H1 (cell line): ENCODE measurements at regions of chr11 and their contacts with region 1.

Region 1: GRCh38 chr11:29328961-29329441 is 687.8 kb downstream of the KCNA4 start:
- DNase-seq: no peak
- H3K4me3 ChIP-seq: no peak overlapping the region
- H3K27ac ChIP-seq: no peak overlapping the region
- H3K4me1 ChIP-seq: no peaks in the 10 kb centered on the region
- H3K27me3 ChIP-seq: no peaks in the 10 kb centered on the region
- CTCF ChIP-seq: peak in 2 of 3 experiments; percentile 28 to 46; a peak in 2 of 4 replicates
- EP300 ChIP-seq: no peak
- POLR2A ChIP-seq: no peak
- RAD21 ChIP-seq: peak; percentile 58 to 68

Region 2: DNA sequence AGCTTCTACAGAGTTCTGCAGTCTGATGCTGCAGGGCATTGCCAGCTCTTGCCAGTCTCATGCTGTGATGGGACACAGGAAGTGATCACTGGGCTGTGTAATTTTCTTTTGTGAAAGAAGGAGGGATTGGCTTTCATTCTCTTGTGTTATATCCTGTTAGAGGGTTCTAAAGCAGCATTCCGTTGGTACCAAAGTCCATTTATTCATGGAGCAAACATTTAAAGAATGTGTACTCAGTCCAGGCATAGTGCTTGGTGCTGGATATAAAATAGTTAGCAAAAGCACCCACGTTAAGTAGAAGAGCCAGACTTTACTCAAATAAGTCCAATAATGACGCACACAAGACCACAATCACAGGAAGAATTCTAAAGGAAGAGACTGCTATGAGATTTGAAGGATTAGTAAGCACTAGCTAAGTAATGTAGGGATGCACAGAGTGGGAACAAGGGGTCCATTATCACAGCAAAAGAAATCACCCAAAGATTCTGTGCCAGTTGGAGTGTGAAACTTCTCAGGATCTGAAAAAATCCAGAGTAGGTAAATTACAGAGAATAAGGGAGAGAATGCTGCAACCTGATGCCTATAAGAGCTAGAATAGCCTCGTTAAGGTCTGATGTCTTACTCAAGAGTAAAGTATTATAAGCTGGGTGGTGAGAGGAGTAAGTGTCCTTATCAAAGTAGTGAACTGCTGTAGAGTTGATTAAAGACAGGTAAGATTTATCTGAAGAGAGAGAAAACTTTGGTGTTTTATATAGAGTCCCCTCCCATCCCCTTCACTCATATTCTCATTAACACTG is 492.5 kb before region 1 on chr11:
- CTCF ChIA-PET with region 1: no interaction called
- POLR2A ChIA-PET with region 1: no interaction called
- DNase-seq: no peak
- H3K4me3 ChIP-seq: no peak overlapping the region
- H3K27ac ChIP-seq: no peak overlapping the region
- H3K4me1 ChIP-seq: peaks cover 0 to 3% (median 0%) of the 10 kb centered on the region in 4 experiments; a peak in 2 of 7 replicates
- H3K27me3 ChIP-seq: no peaks in the 10 kb centered on the region
- CTCF ChIP-seq: no peak
- EP300 ChIP-seq: no peak
- POLR2A ChIP-seq: no peak
- RAD21 ChIP-seq: no peak

Region 3: GRCh38 chr11:29214833-29215232 is 114.2 kb before region 1 on chr11:
- CTCF ChIA-PET with region 1: no interaction called
- POLR2A ChIA-PET with region 1: no interaction called
- DNase-seq: no peak
- H3K4me3 ChIP-seq: no peak overlapping the region
- H3K27ac ChIP-seq: no peak overlapping the region
- H3K4me1 ChIP-seq: no peaks in the 10 kb centered on the region
- H3K27me3 ChIP-seq: no peaks in the 10 kb centered on the region
- CTCF ChIP-seq: no peak
- EP300 ChIP-seq: no peak
- POLR2A ChIP-seq: no peak
- RAD21 ChIP-seq: no peak

Region 4: GRCh38 chr11:29272019-29272654 is 56.9 kb before region 1 on chr11:
- CTCF ChIA-PET with region 1: interaction called, 12 read pairs
- POLR2A ChIA-PET with region 1: no interaction called
- DNase-seq: no peak
- H3K4me3 ChIP-seq: no peak overlapping the region
- H3K27ac ChIP-seq: no peak overlapping the region
- H3K4me1 ChIP-seq: no peaks in the 10 kb centered on the region
- H3K27me3 ChIP-seq: no peaks in the 10 kb centered on the region
- CTCF ChIP-seq: peak in 2 of 3 experiments; percentile 18 to 26; a peak in 2 of 4 replicates
- EP300 ChIP-seq: no peak
- POLR2A ChIP-seq: no peak
- RAD21 ChIP-seq: peak; percentile 33 to 39

Region 5: GRCh38 chr11:29343465-29344333 is 14.7 kb after region 1 on chr11:
- CTCF ChIA-PET with region 1: interaction called, 12 read pairs
- POLR2A ChIA-PET with region 1: no interaction called
- DNase-seq: peak in 1 of 2 experiments; percentile 86
- H3K4me3 ChIP-seq: no peak overlapping the region
- H3K27ac ChIP-seq: no peak overlapping the region
- H3K4me1 ChIP-seq: no peaks in the 10 kb centered on the region
- H3K27me3 ChIP-seq: no peaks in the 10 kb centered on the region
- CTCF ChIP-seq: peak; percentile 83 to 97 (median 93)
- EP300 ChIP-seq: no peak
- POLR2A ChIP-seq: no peak
- RAD21 ChIP-seq: peak; percentile 78 to 81